ENCODE measurements at regions of chr21 and their contacts with region 1.

Region 1: GRCh38 chr21:36976882-36977651 is 10.6 kb upstream of the HLCS start:
- DNase-seq: peak; percentile 76
- H3K4me3 Mint-ChIP-seq: no peak overlapping the region
- H3K27ac Mint-ChIP-seq: no peak overlapping the region
- H3K4me1 Mint-ChIP-seq: peaks cover 8% of the 10 kb centered on the region
- H3K27me3 Mint-ChIP-seq: no peaks in the 10 kb centered on the region
- CTCF ChIP-seq: peak; percentile 69

Region 2: DNA sequence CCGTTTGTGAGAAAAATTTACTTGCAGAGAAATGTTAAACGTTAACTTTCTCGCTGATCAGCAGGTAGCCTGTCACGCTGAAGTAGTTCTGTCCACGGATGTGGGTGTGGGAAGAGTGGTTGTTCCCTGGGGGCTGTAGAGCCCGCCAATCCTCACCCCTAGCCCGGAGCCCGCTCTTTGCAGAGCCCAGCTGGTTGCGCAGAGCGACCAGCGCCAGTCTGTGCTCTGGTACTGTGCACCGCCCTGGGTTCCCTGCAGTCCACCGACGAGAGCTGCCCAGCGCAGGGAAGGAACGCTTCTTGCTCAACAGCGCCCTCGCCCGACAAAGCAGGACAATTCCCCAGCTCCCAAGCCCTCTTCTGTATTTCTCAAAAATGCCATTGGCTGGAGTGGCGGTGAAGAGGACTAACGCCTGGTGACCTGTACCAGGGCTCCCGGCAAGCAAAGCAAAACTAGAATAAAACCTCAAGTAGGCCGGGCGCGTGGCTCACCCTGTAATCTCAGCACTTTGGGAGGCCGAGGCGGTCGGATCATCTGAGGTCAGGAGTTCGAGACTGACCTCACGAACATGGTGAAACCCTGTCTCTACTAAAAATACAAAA is 32.8 kb after region 1 on chr21:
- CTCF ChIA-PET with region 1: interaction called, 7 read pairs
- POLR2A ChIA-PET with region 1: no interaction called
- intact Hi-C with region 1: loop called (anchors 1 kb)
- DNase-seq: peak; percentile 82
- H3K4me3 Mint-ChIP-seq: peak overlapping the region; percentile 58
- H3K27ac Mint-ChIP-seq: no peak overlapping the region
- H3K4me1 Mint-ChIP-seq: no peaks in the 10 kb centered on the region
- H3K27me3 Mint-ChIP-seq: no peaks in the 10 kb centered on the region
- CTCF ChIP-seq: peak; percentile 76

Region 3: DNA sequence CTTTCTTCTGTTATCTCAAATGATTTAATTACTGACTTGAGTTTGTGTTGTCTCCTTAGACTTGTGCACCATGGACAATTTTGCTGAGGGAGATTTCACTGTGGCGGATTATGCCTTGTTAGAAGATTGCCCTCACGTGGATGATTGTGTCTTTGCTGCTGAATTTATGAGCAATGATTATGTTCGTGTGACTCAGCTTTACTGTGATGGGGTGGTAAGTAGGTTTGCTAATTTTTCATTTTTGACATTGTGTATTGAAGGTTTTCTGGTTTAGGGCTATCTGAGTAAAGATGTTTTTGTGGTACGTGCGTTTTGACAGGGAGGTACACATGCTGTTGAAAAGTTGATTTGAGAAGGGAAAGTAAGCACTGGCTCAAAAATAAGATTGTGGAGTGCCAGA is 110.1 kb after region 1 on chr21:
- CTCF ChIA-PET with region 1: interaction called, 4 read pairs
- POLR2A ChIA-PET with region 1: no interaction called
- intact Hi-C with region 1: loop called (anchors 1 kb)
- DNase-seq: peak; percentile 69
- H3K4me3 Mint-ChIP-seq: no peak overlapping the region
- H3K27ac Mint-ChIP-seq: no peak overlapping the region
- H3K4me1 Mint-ChIP-seq: peaks cover 8% of the 10 kb centered on the region
- H3K27me3 Mint-ChIP-seq: no peaks in the 10 kb centered on the region
- CTCF ChIP-seq: peak; percentile 28

Measured in MCF 10A (cell line).